ENCODE measurements at regions of chr9 and their contacts with region 1.

Region 1: DNA sequence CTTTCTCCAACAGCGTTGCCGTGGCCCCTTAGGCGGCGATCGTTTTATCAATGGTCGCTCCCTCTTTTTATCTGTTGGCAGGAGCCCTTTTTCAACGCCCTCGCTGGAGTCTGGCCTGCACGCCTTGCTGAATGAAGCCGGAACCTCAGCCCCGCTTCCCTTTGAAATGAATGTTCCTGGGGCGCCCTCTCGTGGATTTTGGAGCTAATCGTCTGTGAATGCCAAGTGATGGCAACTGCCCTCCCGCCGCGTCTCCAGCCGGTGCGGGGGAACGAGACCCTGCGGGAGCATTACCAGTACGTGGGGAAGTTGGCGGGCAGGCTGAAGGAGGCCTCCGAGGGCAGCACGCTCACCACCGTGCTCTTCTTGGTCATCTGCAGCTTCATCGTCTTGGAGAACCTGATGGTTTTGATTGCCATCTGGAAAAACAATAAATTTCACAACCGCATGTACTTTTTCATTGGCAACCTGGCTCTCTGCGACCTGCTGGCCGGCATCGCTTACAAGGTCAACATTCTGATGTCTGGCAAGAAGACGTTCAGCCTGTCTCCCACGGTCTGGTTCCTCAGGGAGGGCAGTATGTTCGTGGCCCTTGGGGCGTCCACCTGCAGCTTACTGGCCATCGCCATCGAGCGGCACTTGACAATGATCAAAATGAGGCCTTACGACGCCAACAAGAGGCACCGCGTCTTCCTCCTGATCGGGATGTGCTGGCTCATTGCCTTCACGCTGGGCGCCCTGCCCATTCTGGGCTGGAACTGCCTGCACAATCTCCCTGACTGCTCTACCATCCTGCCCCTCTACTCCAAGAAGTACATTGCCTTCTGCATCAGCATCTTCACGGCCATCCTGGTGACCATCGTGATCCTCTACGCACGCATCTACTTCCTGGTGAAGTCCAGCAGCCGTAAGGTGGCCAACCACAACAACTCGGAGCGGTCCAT is 10.0 kb downstream of the S1PR3 start:
- DNase-seq: peak; percentile 61
- H3K4me3 ChIP-seq: peak overlapping the region in 1 of 3 experiments; percentile 13
- H3K27ac ChIP-seq: no peak overlapping the region
- H3K4me1 ChIP-seq: peaks cover 4% of the 10 kb centered on the region
- H3K27me3 ChIP-seq: no peaks in the 10 kb centered on the region
- CTCF ChIP-seq: peak; percentile 61 to 80

Region 2: GRCh38 chr9:87950765-87951488 is 1050.3 kb before region 1 on chr9:
- CTCF ChIA-PET with region 1: no interaction called
- dilution Hi-C with region 1: no loop called
- in situ Hi-C with region 1: loop called in 1 of 2 experiments (anchors 25 kb)
- intact Hi-C with region 1: no loop called
- DNase-seq: peak; percentile 43
- H3K4me3 ChIP-seq: no peak overlapping the region
- H3K27ac ChIP-seq: no peak overlapping the region
- H3K4me1 ChIP-seq: no peaks in the 10 kb centered on the region
- H3K27me3 ChIP-seq: no peaks in the 10 kb centered on the region
- CTCF ChIP-seq: peak; percentile 61 to 75

Region 3: DNA sequence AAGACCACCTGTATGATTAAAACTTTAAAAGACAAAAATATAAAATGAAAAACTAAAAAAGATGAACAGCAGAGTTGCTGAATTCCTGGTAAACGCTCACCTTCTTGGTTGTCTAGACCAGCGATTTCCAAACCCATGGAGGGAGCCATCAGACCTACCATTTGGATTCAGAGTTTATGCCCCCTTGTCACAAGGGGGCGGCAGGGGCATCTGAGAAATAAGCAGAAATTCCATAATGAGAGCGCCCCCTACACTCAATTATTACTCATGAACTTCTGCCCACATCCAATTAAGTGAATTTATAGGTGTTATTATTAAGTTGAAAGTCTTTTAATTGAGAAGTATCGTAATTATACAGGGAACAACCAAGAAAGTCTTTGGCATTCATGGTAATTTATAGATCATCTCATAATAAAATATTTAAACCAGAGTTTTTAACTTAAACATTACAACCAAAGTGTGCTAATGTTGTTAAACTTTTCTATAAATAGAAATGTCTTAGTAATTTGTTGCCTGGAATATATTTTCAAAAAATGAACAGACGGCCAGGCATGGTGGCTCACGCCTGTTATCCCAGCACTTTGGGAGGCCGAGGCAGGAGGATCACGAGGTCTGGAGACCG is 827.8 kb before region 1 on chr9:
- CTCF ChIA-PET with region 1: no interaction called
- dilution Hi-C with region 1: no loop called
- in situ Hi-C with region 1: no loop called
- intact Hi-C with region 1: loop called (anchors 5 kb)
- DNase-seq: peak; percentile 67
- H3K4me3 ChIP-seq: no peak overlapping the region
- H3K27ac ChIP-seq: no peak overlapping the region
- H3K4me1 ChIP-seq: no peaks in the 10 kb centered on the region
- H3K27me3 ChIP-seq: no peaks in the 10 kb centered on the region
- CTCF ChIP-seq: peak; percentile 80 to 84

Region 4: GRCh38 chr9:88605512-88606362 is 395.5 kb before region 1 on chr9:
- CTCF ChIA-PET with region 1: no interaction called
- dilution Hi-C with region 1: loop called (anchors 25 kb)
- in situ Hi-C with region 1: no loop called
- intact Hi-C with region 1: no loop called
- DNase-seq: no peak
- H3K4me3 ChIP-seq: no peak overlapping the region
- H3K27ac ChIP-seq: no peak overlapping the region
- H3K4me1 ChIP-seq: no peaks in the 10 kb centered on the region
- H3K27me3 ChIP-seq: no peaks in the 10 kb centered on the region
- CTCF ChIP-seq: no peak

Region 5: GRCh38 chr9:88722753-88723152 is 278.5 kb before region 1 on chr9:
- CTCF ChIA-PET with region 1: no interaction called
- dilution Hi-C with region 1: no loop called
- in situ Hi-C with region 1: loop called (anchors 10 kb)
- intact Hi-C with region 1: loop called (anchors 1 kb)
- DNase-seq: peak; percentile 37
- H3K4me3 ChIP-seq: no peak overlapping the region
- H3K27ac ChIP-seq: no peak overlapping the region
- H3K4me1 ChIP-seq: no peaks in the 10 kb centered on the region
- H3K27me3 ChIP-seq: no peaks in the 10 kb centered on the region
- CTCF ChIP-seq: peak; percentile 33 to 70

Region 6: GRCh38 chr9:89278997-89279739 is 277.9 kb after region 1 on chr9:
- CTCF ChIA-PET with region 1: no interaction called
- dilution Hi-C with region 1: no loop called
- in situ Hi-C with region 1: no loop called
- intact Hi-C with region 1: loop called (anchors 2 kb)
- DNase-seq: peak; percentile 49
- H3K4me3 ChIP-seq: no peak overlapping the region
- H3K27ac ChIP-seq: no peak overlapping the region
- H3K4me1 ChIP-seq: peaks cover 7% of the 10 kb centered on the region
- H3K27me3 ChIP-seq: no peaks in the 10 kb centered on the region
- CTCF ChIP-seq: peak; percentile 73 to 84

Measured in mammary epithelial cell (primary cell).